ENCODE measurements at regions of chr2 and their contacts with region 1.

Region 1: DNA sequence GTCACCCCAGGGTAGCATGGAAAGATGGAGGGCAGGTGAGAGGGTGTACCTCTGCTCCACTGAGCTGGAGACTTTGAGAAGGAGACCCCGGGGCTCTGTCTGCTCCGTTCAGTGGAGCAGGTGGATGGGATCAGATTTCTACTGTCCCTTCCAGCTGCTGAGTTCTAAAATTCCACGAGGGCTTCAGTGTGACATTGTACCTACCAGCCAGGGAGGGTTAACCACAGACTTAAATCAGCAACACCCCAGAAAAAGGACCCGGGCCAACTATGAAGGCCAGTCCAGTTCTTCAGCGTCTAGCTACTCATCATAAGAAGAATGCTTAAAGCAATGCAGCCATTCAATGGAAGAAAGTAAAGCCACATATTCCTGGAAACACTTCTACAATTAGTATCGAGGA is 23.8 kb downstream of the STAT1 start:
- DNase-seq: no peak
- ATAC-seq: no peak
- H3K4me3 ChIP-seq: no peak overlapping the region
- H3K4me3 Mint-ChIP-seq: no peak overlapping the region
- H3K27ac ChIP-seq: no peak overlapping the region
- H3K27ac Mint-ChIP-seq: peak overlapping the region; percentile 67
- H3K4me1 ChIP-seq: peaks cover 21% of the 10 kb centered on the region
- H3K4me1 Mint-ChIP-seq: peaks cover 47% of the 10 kb centered on the region
- H3K27me3 ChIP-seq: no peaks in the 10 kb centered on the region
- H3K27me3 Mint-ChIP-seq: no peaks in the 10 kb centered on the region
- CTCF ChIP-seq: no peak

Region 2: GRCh38 chr2:191003405-191004309 is 13.5 kb after region 1 on chr2:
- CTCF ChIA-PET with region 1: interaction called, 5 read pairs
- POLR2A ChIA-PET with region 1: interaction called, 3 read pairs
- intact Hi-C with region 1: loop called in 1 of 2 experiments (anchors 2 kb)
- DNase-seq: no peak
- ATAC-seq: no peak
- H3K4me3 ChIP-seq: no peak overlapping the region
- H3K4me3 Mint-ChIP-seq: no peak overlapping the region
- H3K27ac ChIP-seq: peak overlapping the region in 1 of 2 experiments; percentile 18
- H3K27ac Mint-ChIP-seq: peak overlapping the region; percentile 86
- H3K4me1 ChIP-seq: peaks cover 22% of the 10 kb centered on the region
- H3K4me1 Mint-ChIP-seq: peaks cover 68% of the 10 kb centered on the region
- H3K27me3 ChIP-seq: no peaks in the 10 kb centered on the region
- H3K27me3 Mint-ChIP-seq: no peaks in the 10 kb centered on the region
- CTCF ChIP-seq: no peak

Region 3: DNA sequence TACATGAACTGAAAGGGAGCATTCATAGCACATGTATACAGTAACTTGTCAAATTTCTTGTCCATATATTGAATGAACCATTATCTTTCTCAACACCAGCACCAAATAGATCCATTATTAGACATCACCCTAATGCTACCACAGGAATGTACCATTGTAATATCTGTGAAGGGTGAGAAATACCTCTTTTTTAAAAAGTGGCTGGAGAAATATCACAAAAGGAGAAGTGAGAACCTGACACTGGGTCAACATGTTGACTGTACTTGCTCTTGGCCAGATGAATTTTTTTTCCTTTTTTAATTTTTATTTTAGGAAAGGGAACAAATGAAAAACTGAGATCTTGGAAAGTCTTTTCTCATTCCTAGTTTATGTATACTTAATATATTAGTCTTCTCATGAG is 793.3 kb after region 1 on chr2:
- CTCF ChIA-PET with region 1: no interaction called
- POLR2A ChIA-PET with region 1: no interaction called
- intact Hi-C with region 1: no loop called
- DNase-seq: no peak
- ATAC-seq: no peak
- H3K4me3 ChIP-seq: no peak overlapping the region
- H3K4me3 Mint-ChIP-seq: no peak overlapping the region
- H3K27ac ChIP-seq: no peak overlapping the region
- H3K27ac Mint-ChIP-seq: no peak overlapping the region
- H3K4me1 ChIP-seq: no peaks in the 10 kb centered on the region
- H3K4me1 Mint-ChIP-seq: peaks cover 2% of the 10 kb centered on the region
- H3K27me3 ChIP-seq: no peaks in the 10 kb centered on the region
- H3K27me3 Mint-ChIP-seq: no peaks in the 10 kb centered on the region
- CTCF ChIP-seq: no peak